MCF 10A (cell line): ENCODE measurements at regions of chr17 and their contacts with region 1.

Region 1: GRCh38 chr17:81101614-81102306 is 63.5 kb upstream of the PVALEF start:
- DNase-seq: peak; percentile 73
- H3K4me3 Mint-ChIP-seq: no peak overlapping the region
- H3K27ac Mint-ChIP-seq: no peak overlapping the region
- H3K4me1 Mint-ChIP-seq: peaks cover 10% of the 10 kb centered on the region
- H3K27me3 Mint-ChIP-seq: no peaks in the 10 kb centered on the region
- CTCF ChIP-seq: peak; percentile 100

Region 2: GRCh38 chr17:81025741-81026129 is 76.0 kb before region 1 on chr17:
- CTCF ChIA-PET with region 1: interaction called, 27 read pairs
- POLR2A ChIA-PET with region 1: interaction called, 4 read pairs
- intact Hi-C with region 1: loop called (anchors 1 kb)
- DNase-seq: no peak
- H3K4me3 Mint-ChIP-seq: no peak overlapping the region
- H3K27ac Mint-ChIP-seq: no peak overlapping the region
- H3K4me1 Mint-ChIP-seq: peaks cover 6% of the 10 kb centered on the region
- H3K27me3 Mint-ChIP-seq: peaks cover 16% of the 10 kb centered on the region
- CTCF ChIP-seq: no peak

Region 3: DNA sequence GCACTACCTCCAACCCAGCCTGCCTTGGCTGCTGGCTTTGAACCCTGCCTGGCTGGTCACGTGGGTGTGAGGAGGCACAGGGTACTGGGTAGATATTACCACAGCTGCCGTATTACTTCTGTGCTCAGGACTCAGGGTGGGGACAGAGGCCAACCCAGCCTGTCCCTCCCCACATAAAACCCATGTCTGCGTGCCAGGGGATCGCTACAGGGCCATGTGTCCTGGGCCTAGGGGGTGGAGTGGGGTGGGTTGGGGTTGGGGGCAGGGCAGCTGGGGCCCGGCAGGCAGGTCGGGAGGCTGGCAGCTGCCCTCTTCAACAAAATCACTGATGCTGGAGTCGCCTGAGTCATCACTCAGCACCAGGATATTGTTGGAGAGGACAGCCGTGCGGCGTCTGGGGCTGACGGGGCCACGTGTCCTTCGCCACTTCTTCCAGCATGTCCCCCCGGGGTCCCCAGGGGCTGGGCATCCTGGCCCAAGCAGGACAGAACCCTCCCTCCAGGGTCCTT is 23.9 kb after region 1 on chr17:
- CTCF ChIA-PET with region 1: no interaction called
- POLR2A ChIA-PET with region 1: no interaction called
- intact Hi-C with region 1: no loop called
- DNase-seq: peak; percentile 38
- H3K4me3 Mint-ChIP-seq: no peak overlapping the region
- H3K27ac Mint-ChIP-seq: no peak overlapping the region
- H3K4me1 Mint-ChIP-seq: no peaks in the 10 kb centered on the region
- H3K27me3 Mint-ChIP-seq: no peaks in the 10 kb centered on the region
- CTCF ChIP-seq: no peak